ENCODE measurements at regions of chr6 and their contacts with region 1.

Region 1: DNA sequence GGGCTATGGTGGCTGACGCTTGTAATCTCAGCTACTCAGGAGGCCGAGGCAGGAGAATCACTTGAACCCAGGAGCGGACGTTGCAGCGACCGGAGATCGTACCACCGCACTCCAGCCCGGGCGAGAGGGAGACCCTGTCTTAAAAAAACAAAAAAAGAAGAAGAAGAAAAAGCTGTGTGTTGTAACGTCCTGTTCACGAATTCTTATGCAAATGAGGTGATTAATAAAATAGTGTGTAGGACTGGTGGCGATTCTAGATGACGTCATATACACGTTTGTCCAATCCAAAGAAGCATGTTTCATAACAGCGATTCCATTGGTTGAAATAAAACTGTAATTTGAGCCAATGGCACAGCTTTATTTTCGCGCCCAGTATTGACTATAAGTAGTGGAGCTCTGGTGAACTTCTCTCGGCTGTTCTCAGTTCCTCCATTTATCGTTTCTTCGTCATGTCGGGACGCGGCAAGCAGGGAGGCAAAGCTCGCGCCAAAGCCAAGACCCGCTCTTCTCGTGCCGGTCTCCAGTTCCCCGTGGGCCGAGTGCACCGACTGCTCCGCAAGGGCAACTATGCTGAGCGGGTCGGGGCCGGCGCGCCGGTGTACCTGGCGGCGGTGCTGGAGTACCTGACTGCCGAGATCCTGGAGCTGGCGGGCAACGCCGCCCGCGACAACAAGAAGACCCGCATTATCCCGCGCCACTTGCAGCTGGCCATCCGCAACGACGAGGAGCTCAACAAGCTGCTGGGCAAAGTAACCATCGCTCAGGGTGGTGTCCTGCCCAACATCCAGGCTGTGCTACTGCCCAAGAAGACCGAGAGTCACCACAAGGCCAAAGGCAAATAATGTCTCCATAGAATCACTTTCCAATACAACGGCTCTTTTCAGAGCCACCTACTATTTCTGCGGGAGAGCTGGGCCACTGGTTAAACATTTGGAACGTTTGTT is 47.0 kb downstream of the OR2B2 start:
- DNase-seq: peak; percentile 98
- H3K4me3 ChIP-seq: peak overlapping the region; percentile 60 to 71 (median 66)
- H3K27ac ChIP-seq: peak overlapping the region; percentile 82
- H3K4me1 ChIP-seq: peaks cover 10% of the 10 kb centered on the region
- H3K27me3 ChIP-seq: no peaks in the 10 kb centered on the region
- CTCF ChIP-seq: no peak
- POLR2A ChIP-seq: peak; percentile 77

Region 2: DNA sequence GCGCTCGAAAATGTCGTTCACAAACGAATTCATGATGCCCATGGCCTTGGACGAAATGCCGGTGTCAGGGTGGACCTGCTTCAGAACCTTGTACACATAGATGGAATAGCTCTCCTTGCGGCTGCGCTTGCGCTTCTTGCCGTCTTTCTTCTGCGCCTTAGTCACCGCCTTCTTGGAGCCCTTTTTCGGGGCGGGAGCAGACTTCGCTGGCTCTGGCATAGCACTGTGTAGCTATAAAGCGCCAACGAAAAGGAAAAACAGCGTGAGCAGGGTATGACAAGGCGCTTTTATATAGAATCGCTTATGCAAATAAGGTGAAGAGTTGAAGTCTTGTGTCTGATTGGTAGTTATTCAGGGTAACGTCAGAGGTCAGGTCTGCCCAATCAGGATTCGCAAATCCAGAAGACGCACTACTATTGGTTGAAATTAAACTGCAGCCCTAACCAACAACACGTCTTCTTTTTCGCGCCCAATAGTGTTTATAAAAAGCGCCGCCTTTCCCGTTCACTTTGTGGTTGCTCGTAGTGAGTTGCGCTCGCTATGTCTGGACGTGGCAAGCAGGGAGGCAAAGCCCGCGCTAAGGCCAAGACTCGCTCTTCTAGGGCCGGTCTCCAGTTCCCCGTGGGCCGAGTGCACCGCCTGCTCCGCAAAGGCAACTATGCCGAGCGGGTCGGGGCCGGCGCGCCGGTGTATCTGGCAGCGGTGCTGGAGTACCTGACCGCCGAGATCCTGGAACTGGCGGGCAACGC is 732.5 kb before region 1 on chr6:
- CTCF ChIA-PET with region 1: no interaction called
- POLR2A ChIA-PET with region 1: interaction called, 10 read pairs
- dilution Hi-C with region 1: no loop called
- intact Hi-C with region 1: no loop called
- DNase-seq: peak; percentile 100
- H3K4me3 ChIP-seq: peak overlapping the region; percentile 37 to 81 (median 59)
- H3K27ac ChIP-seq: peak overlapping the region; percentile 86
- H3K4me1 ChIP-seq: peaks cover 19% of the 10 kb centered on the region
- H3K27me3 ChIP-seq: no peaks in the 10 kb centered on the region
- CTCF ChIP-seq: no peak
- POLR2A ChIP-seq: peak; percentile 76

Region 3: GRCh38 chr6:27668442-27669294 is 196.5 kb before region 1 on chr6:
- CTCF ChIA-PET with region 1: no interaction called
- POLR2A ChIA-PET with region 1: no interaction called
- dilution Hi-C with region 1: no loop called
- intact Hi-C with region 1: no loop called
- DNase-seq: peak; percentile 44
- H3K4me3 ChIP-seq: peak overlapping the region in 2 of 3 experiments; percentile 35 to 48
- H3K27ac ChIP-seq: no peak overlapping the region
- H3K4me1 ChIP-seq: peaks cover 10% of the 10 kb centered on the region
- H3K27me3 ChIP-seq: peaks cover 15 to 17% of the 10 kb centered on the region in 2 experiments
- CTCF ChIP-seq: no peak
- POLR2A ChIP-seq: no peak

Region 4: GRCh38 chr6:27838058-27838944 is 26.9 kb before region 1 on chr6:
- CTCF ChIA-PET with region 1: interaction called, 43 read pairs
- POLR2A ChIA-PET with region 1: interaction called, 129 read pairs
- dilution Hi-C with region 1: no loop called
- intact Hi-C with region 1: loop called (anchors 1 kb)
- DNase-seq: peak; percentile 100
- H3K4me3 ChIP-seq: peak overlapping the region; percentile 25 to 86 (median 59)
- H3K27ac ChIP-seq: peak overlapping the region; percentile 95
- H3K4me1 ChIP-seq: peaks cover 14% of the 10 kb centered on the region
- H3K27me3 ChIP-seq: no peaks in the 10 kb centered on the region
- CTCF ChIP-seq: no peak
- POLR2A ChIP-seq: peak; percentile 87

Region 5: DNA sequence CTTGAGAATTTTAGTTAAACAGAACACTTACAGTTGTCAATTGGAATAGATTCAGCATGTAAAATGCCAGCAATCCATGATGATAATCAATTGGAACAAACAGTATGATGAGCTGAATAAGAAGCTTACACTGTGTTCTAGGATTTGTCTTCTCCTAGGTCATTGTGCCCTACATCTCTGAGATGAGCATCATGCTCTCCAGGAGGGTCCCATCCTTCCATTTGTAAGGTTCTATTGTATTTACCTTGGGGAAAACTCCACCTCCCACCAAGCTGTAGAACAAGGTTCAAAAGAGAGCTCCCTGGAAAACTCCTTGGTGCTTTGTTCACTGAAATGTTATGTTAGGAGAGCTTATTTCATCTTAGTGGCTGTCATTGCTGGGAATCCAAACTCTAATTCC is 13.7 kb before region 1 on chr6:
- CTCF ChIA-PET with region 1: interaction called, 10 read pairs
- POLR2A ChIA-PET with region 1: interaction called, 4 read pairs
- dilution Hi-C with region 1: no loop called
- intact Hi-C with region 1: no loop called
- DNase-seq: no peak
- H3K4me3 ChIP-seq: no peak overlapping the region
- H3K27ac ChIP-seq: no peak overlapping the region
- H3K4me1 ChIP-seq: no peaks in the 10 kb centered on the region
- H3K27me3 ChIP-seq: peaks cover 17 to 18% of the 10 kb centered on the region in 2 experiments
- CTCF ChIP-seq: no peak
- POLR2A ChIP-seq: no peak

Region 6: GRCh38 chr6:28923318-28924102 is 1058.3 kb after region 1 on chr6 and contains the start of gene TRIM27:
- CTCF ChIA-PET with region 1: no interaction called
- POLR2A ChIA-PET with region 1: interaction called, 10 read pairs
- dilution Hi-C with region 1: no loop called
- intact Hi-C with region 1: no loop called
- DNase-seq: peak; percentile 85
- H3K4me3 ChIP-seq: peak within 1 kb of the TSS; percentile 55 to 90 (median 63)
- H3K27ac ChIP-seq: peak within 1 kb of the TSS; percentile 77
- H3K4me1 ChIP-seq: peaks cover 18% of the 10 kb centered on the region
- H3K27me3 ChIP-seq: no peaks in the 10 kb centered on the region
- CTCF ChIP-seq: no peak
- POLR2A ChIP-seq: peak; percentile 95
- total RNA-seq, gene TRIM27: 67.5 and 69.2 TPM in 2 replicates

Measured in endothelial cell of umbilical vein (primary cell).